ENCODE measurements at regions of chr10 and their contacts with region 1.

Region 1: DNA sequence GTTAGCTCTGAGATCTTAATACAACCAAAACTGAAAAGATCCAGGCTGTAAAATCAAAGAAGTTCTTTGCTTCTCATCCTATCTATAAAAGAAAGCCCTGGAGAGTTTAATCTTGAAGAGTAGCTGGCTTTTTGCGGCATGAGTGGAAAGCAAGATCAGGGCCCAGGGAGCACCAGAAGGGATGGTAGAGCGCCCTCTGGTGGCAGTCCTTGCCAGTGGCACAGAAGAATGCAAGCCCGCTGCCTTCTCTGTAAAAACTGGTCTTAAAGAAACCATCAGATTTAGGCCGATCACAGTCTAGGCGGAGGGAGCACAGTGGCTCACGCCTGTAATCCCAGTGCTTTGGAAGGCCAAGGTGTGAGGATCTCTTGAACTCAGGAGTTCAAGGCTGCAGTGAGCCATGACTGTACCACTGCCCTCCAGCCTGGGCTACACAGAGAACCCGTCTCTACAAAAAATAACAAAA is 35.6 kb downstream of the CPN1 start:
- DNase-seq: peak; percentile 55 to 97 (median 88)

Region 2: DNA sequence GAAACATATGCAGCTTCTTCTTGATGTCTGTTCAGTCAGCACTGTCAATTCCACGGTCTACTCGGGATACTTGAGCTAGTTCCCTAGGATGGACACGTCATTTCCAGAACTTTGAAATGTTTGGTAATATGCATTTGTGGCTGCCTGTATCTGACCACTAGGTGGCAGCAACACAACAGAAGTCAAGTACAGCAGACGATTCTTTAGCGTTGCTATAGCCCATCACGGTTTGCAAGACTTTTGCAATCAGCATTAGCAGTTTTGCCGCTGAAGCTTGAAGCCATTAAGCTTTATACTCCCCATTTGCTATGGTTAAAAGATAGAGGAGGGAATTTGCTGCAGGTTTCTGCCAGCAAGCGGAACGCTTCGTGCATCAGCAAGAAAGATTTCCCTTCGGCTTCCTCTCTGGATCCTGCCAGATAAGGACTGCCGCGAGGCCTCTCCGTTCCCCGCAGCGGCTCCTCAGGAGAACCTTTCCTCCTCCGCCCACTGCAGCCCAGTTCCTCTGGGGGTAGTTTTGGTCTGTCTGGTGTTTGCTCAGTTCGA is 200.1 kb before region 1 on chr10:
- intact Hi-C with region 1: loop called (anchors 1 kb)
- DNase-seq: peak in 9 of 10 donors; percentile 21 to 91 (median 74)

Region 3: DNA sequence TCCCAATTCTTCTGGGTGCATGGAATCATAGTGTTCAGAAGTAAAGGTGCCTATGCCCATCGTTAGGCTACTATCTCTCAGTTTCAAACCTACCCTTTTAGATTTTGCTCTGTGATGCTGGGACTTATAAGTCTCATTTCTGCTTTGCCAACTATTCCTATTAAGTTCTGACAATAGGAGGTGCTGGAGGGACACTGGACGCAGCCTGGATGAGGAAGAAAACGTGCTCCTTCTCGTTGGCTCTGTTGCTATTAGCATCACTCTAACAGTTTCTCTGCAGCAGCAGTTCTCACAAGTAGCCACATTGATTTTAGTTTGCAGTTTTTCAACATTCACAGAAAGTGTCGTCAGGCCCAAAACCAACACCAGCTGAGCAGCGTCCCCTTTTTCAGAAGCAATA is 191.2 kb before region 1 on chr10:
- intact Hi-C with region 1: loop called (anchors 2 kb)
- DNase-seq: peak in 2 of 10 donors; percentile 7 to 24

Region 4: DNA sequence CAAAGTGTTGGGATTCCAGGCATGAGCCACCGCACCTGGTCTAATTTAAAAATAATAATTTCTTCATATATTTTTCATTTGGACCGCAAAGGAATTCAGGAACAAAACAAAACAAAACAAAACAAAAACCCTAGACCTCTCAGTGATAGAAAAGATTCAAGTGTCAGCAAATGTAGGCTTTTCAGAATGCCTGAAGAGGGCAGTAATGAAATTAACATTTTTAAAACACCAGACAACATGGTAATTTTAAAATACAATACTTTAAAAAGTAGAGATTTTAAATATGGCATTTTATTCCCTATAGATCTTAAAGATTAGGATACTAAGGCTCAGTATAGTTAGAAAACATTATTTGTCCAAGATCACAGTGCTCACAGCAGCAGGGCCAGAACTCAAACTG is 72.9 kb before region 1 on chr10:
- intact Hi-C with region 1: loop called (anchors 5 kb)
- DNase-seq: no peak

Region 5: GRCh38 chr10:100146875-100147650 is 101.0 kb after region 1 on chr10:
- intact Hi-C with region 1: no loop called
- DNase-seq: no peak

Measured in posterior cingulate gyrus (tissue), 11 donors.